Activated CD4-positive, alpha-beta memory T cell treated with anti-CD3 and anti-CD28 coated beads for 36 hours (primary cell): ENCODE measurements at regions of chr2 and their contacts with region 1.

Region 1: GRCh38 chr2:227528803-227529202 is 56.8 kb downstream of the AGFG1 start:
- DNase-seq: no peak
- H3K4me3 Mint-ChIP-seq: no peak overlapping the region
- H3K27ac Mint-ChIP-seq: peak overlapping the region; percentile 56
- H3K4me1 Mint-ChIP-seq: peaks cover 22% of the 10 kb centered on the region
- H3K27me3 Mint-ChIP-seq: no peaks in the 10 kb centered on the region

Region 2: DNA sequence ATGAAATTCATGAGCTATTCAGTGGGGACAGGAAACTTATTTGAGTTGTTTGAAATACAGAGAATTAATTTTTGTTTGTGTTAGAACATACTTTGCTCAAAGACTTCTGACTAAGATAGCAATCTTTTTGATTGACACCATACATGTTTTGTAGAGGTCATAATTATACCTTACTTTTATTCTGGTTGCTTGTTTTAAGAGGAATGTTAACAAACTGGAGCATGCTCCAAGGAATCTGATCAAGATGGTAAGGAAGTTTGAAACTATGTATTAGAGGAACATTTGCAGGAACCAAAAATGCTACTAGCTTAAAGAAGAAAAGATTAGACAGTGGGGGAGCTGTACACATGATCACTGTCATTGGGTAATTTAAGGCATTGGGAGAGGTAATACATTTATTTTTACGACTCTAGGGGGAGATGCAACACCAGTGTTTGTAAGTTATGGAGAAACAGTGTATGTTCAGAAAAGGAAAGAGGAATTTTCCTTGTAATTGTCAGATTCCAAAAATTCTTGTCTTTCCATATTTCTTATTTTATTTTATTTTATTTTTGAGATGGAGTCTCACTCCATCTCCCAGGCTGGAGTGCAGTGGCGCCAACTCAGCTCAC is 48.8 kb before region 1 on chr2:
- CTCF ChIA-PET with region 1: no interaction called
- POLR2A ChIA-PET with region 1: no interaction called
- intact Hi-C with region 1: loop called (anchors 2 kb)
- DNase-seq: no peak
- H3K4me3 Mint-ChIP-seq: no peak overlapping the region
- H3K27ac Mint-ChIP-seq: peak overlapping the region; percentile 44
- H3K4me1 Mint-ChIP-seq: peaks cover 74% of the 10 kb centered on the region
- H3K27me3 Mint-ChIP-seq: no peaks in the 10 kb centered on the region

Region 3: GRCh38 chr2:227509824-227510619 is 18.8 kb before region 1 on chr2:
- CTCF ChIA-PET with region 1: no interaction called
- POLR2A ChIA-PET with region 1: interaction called, 3 read pairs
- intact Hi-C with region 1: loop called (anchors 1 kb)
- DNase-seq: no peak
- H3K4me3 Mint-ChIP-seq: no peak overlapping the region
- H3K27ac Mint-ChIP-seq: no peak overlapping the region
- H3K4me1 Mint-ChIP-seq: peaks cover 83% of the 10 kb centered on the region
- H3K27me3 Mint-ChIP-seq: no peaks in the 10 kb centered on the region

Region 4: GRCh38 chr2:227578651-227579050 is 49.8 kb after region 1 on chr2:
- CTCF ChIA-PET with region 1: no interaction called
- POLR2A ChIA-PET with region 1: no interaction called
- intact Hi-C with region 1: no loop called
- DNase-seq: no peak
- H3K4me3 Mint-ChIP-seq: no peak overlapping the region
- H3K27ac Mint-ChIP-seq: no peak overlapping the region
- H3K4me1 Mint-ChIP-seq: no peaks in the 10 kb centered on the region
- H3K27me3 Mint-ChIP-seq: peaks cover 26% of the 10 kb centered on the region

Region 5: GRCh38 chr2:227643990-227644551 is 115.3 kb after region 1 on chr2:
- CTCF ChIA-PET with region 1: no interaction called
- POLR2A ChIA-PET with region 1: no interaction called
- intact Hi-C with region 1: no loop called
- DNase-seq: no peak
- H3K4me3 Mint-ChIP-seq: no peak overlapping the region
- H3K27ac Mint-ChIP-seq: no peak overlapping the region
- H3K4me1 Mint-ChIP-seq: no peaks in the 10 kb centered on the region
- H3K27me3 Mint-ChIP-seq: peaks cover 5% of the 10 kb centered on the region